Mammary epithelial cell (primary cell): ENCODE measurements at regions of chr15 and their contacts with region 1.

Region 1: GRCh38 chr15:100341662-100342560 is at the start of gene ADAMTS17:
- DNase-seq: peak; percentile 91
- H3K4me3 ChIP-seq: peak within 1 kb of the TSS; percentile 53 to 66 (median 63)
- H3K27ac ChIP-seq: no peak within 1 kb of the TSS
- H3K4me1 ChIP-seq: peaks cover 6% of the 10 kb centered on the region
- H3K27me3 ChIP-seq: peaks cover 7% of the 10 kb centered on the region
- CTCF ChIP-seq: peak; percentile 79 to 93
- total RNA-seq, gene ADAMTS17: 0.45 to 1.7 TPM

Region 2: DNA sequence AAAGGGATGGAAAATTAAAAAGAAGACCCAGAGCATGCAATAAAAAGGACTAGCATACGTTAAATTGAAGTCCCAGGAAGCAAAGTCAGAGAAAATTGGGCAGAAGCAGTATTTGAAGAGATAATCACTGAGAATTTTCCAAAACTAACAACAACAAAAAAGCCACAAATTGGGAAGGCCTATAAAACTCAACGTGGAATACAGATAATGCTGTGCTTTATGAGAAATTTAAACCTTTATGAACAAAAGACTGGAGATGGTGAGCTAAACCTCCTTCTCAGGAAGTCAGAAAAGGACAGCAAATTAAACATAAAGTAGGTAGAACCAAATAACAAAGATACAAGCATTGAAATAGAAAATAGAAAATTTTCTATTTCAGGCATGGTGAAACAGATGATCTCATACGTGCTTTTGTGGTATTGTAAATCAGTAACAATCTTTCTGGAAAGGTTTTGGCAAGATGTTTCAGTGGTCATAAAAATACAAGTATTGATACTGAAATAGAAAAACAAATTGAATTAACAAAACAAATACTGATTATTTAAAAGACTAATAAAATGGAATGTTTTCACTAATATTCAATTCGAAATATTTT is 664.3 kb before region 1 on chr15:
- CTCF ChIA-PET with region 1: no interaction called
- dilution Hi-C with region 1: no loop called
- in situ Hi-C with region 1: no loop called
- intact Hi-C with region 1: no loop called
- DNase-seq: no peak
- H3K4me3 ChIP-seq: no peak overlapping the region
- H3K27ac ChIP-seq: no peak overlapping the region
- H3K4me1 ChIP-seq: no peaks in the 10 kb centered on the region
- H3K27me3 ChIP-seq: no peaks in the 10 kb centered on the region
- CTCF ChIP-seq: no peak

Region 3: DNA sequence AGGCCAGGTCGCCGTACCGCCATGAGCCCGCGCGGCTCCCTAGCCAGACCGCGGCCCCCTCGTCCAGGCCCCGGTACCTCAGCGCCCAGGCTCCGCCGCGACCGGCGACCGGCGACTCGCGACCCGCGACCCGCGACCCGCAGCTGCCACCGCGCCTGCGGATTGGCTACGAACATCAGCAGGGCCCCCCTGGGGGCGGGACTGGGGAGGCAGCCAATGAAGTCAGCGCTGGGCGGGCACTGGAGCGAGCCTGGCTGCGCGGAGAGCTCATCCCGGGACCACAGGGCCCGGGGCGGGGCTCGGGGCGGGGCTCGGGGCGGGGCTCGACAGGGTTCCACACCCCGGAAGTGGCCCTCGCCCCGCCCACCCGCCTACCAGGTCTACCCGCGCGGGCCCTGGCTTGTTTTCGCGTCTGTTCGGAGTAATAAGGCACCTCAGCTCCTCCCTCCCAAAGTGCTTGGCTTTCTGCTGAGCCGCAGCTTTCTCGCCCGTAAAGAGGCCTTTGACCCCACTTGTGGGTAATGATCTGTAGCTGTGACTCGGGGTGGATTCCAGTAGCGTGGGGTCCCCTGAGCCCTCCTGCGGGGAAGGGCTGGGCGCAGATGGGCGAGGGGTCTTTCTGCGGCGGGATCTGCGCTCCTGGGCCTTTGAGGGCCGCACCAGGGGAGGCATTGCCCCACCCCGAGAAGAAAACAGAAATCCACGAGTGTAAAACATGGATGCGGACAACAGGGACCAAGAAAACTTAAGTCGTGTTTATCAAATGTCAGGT is 608.5 kb before region 1 on chr15 and contains the start of gene LYSMD4:
- CTCF ChIA-PET with region 1: interaction called, 15 read pairs
- dilution Hi-C with region 1: no loop called
- in situ Hi-C with region 1: no loop called
- intact Hi-C with region 1: no loop called
- DNase-seq: peak; percentile 91
- H3K4me3 ChIP-seq: peak within 1 kb of the TSS; percentile 64 to 82 (median 70)
- H3K27ac ChIP-seq: peak within 1 kb of the TSS; percentile 47
- H3K4me1 ChIP-seq: peaks cover 28% of the 10 kb centered on the region
- H3K27me3 ChIP-seq: no peaks in the 10 kb centered on the region
- CTCF ChIP-seq: no peak
- total RNA-seq, gene LYSMD4: 10.9 to 20.5 TPM

Region 4: GRCh38 chr15:99961011-99961441 is 380.9 kb before region 1 on chr15:
- CTCF ChIA-PET with region 1: no interaction called
- dilution Hi-C with region 1: no loop called
- in situ Hi-C with region 1: no loop called
- intact Hi-C with region 1: loop called (anchors 1 kb)
- DNase-seq: peak; percentile 48
- H3K4me3 ChIP-seq: no peak overlapping the region
- H3K27ac ChIP-seq: no peak overlapping the region
- H3K4me1 ChIP-seq: peaks cover 8% of the 10 kb centered on the region
- H3K27me3 ChIP-seq: no peaks in the 10 kb centered on the region
- CTCF ChIP-seq: peak; percentile 20 to 45

Region 5: GRCh38 chr15:100383302-100384107 is 41.6 kb after region 1 on chr15:
- CTCF ChIA-PET with region 1: no interaction called
- dilution Hi-C with region 1: no loop called
- in situ Hi-C with region 1: no loop called
- intact Hi-C with region 1: loop called (anchors 1 kb)
- DNase-seq: peak; percentile 23
- H3K4me3 ChIP-seq: no peak overlapping the region
- H3K27ac ChIP-seq: no peak overlapping the region
- H3K4me1 ChIP-seq: no peaks in the 10 kb centered on the region
- H3K27me3 ChIP-seq: no peaks in the 10 kb centered on the region
- CTCF ChIP-seq: peak; percentile 34 to 56

Region 6: DNA sequence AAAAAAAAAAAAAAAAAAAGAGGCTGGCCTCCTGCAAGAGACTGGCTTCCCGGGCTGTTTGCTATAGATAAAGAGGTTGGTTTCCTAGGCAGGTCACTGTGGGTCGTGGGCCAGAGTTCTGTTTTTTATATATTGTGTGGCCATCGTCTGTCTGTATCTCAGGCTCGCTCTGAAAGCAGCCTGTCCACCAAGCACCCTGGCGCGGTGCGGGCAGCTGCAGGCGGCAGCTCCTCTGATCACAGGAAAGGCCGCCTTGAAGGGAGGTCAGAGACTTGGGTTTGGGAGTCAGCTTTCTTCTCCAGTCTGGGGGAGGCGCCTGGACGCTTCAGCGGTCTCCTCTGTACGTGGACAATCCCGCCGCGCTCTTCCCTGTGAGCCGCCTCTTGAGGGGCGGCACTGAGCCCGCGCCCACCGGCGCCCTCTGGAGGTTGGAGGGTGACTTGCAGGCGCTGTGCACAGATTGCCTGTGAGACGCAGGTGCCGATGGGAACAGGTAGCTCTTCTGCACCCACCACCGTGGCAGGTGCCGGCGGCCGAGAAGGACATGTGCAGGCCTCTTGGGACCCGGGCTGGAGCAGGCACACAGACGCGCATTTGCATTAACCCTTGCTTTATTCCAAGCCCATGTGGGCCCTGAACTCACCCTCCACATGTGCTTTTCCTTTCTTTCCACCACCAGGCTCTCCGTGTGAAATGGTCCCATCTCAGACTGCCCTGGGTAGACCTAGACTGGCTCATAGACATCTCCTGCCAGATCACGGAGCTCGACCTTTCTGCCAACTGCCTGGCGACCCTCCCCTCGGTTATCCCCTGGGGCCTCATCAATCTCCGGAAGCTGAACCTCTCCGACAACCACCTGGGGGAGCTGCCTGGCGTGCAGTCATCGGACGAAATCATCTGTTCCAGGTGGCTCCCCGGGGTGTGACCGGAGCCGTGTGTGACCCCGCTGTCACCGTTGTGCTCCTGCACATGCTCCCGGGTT is 666.5 kb after region 1 on chr15:
- CTCF ChIA-PET with region 1: no interaction called
- dilution Hi-C with region 1: no loop called
- in situ Hi-C with region 1: no loop called
- intact Hi-C with region 1: loop called (anchors 1 kb)
- DNase-seq: peak; percentile 82
- H3K4me3 ChIP-seq: peak overlapping the region; percentile 52 to 72 (median 64)
- H3K27ac ChIP-seq: no peak overlapping the region
- H3K4me1 ChIP-seq: peaks cover 24% of the 10 kb centered on the region
- H3K27me3 ChIP-seq: no peaks in the 10 kb centered on the region
- CTCF ChIP-seq: peak; percentile 93 to 99